AG04449 (cell line): ENCODE measurements at regions of chr17 and their contacts with region 1.

Region 1: GRCh38 chr17:27879987-27880608 is 13.1 kb downstream of the LYRM9 start:
- DNase-seq: no peak
- H3K4me3 ChIP-seq: no peak overlapping the region
- CTCF ChIP-seq: peak; percentile 92

Region 2: DNA sequence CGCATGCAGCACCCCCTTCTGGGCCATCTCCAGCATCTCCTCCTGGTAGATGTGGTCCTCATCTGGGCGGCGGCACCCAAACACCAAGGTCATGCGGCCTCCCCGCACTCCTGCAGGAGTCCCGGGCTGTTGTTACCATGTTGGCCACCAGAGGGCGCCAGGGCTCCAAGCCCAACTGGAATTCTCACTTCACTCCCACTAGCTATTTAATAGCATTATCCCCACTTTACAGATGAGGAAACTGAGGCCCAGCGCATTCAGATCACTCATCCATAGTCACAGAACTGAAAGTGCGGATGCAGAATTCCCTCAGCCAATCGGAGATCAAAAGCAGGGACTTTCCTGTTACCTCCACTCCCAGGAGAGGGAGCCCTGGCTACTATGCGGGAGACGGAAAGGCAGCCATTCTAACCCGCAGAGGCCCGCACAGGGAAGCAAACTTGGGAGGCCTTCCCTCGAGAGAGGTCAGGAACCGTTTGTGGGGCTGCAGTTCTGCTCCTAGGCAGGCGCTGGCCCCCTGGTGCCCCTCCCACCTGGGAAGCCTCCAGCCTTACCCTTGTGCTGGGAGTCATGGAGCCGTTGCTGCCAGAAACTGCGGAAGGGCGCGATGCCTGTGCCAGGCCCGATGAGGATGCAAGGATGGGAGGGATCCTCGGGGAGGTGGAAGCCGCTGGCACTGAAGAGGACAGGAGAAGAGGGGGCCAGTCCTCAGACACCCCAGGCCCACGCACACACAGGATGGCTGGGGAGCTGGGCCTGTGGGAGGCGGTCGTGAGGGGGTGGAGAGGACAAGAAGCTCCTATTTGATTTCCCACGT is 119.8 kb before region 1 on chr17:
- CTCF ChIA-PET with region 1: interaction called, 188 read pairs
- POLR2A ChIA-PET with region 1: no interaction called
- DNase-seq: no peak
- H3K4me3 ChIP-seq: no peak overlapping the region
- CTCF ChIP-seq: peak; percentile 78

Region 3: GRCh38 chr17:27892866-27893769 is 13.0 kb after region 1 on chr17 and contains the start of gene LYRM9:
- CTCF ChIA-PET with region 1: interaction called, 104 read pairs
- POLR2A ChIA-PET with region 1: no interaction called
- DNase-seq: no peak
- H3K4me3 ChIP-seq: peak within 1 kb of the TSS; percentile 66
- CTCF ChIP-seq: peak; percentile 86